ENCODE measurements at regions of chr18 and their contacts with region 1.

Region 1: GRCh38 chr18:3062798-3063680 is 50.1 kb upstream of the LPIN2 start:
- DNase-seq: peak in 1 of 2 experiments; percentile 42
- ATAC-seq: peak; percentile 59 to 91; a peak in 3 of 6 replicates
- H3K4me3 ChIP-seq: no peak overlapping the region
- H3K27ac ChIP-seq: peak overlapping the region in 1 of 2 experiments; percentile 47; a peak in 1 of 6 replicates
- H3K4me1 ChIP-seq: peaks cover 10% of the 10 kb centered on the region
- CTCF ChIP-seq: peak; percentile 60
- EP300 ChIP-seq: no peak
- POLR2A ChIP-seq: no peak
- RAD21 ChIP-seq: peak; percentile 66 to 68

Region 2: GRCh38 chr18:2746274-2746673 is 316.8 kb before region 1 on chr18:
- CTCF ChIA-PET with region 1: no interaction called
- POLR2A ChIA-PET with region 1: no interaction called
- DNase-seq: no peak
- ATAC-seq: no peak
- H3K4me3 ChIP-seq: no peak overlapping the region
- H3K27ac ChIP-seq: no peak overlapping the region
- H3K4me1 ChIP-seq: no peaks in the 10 kb centered on the region
- CTCF ChIP-seq: no peak
- EP300 ChIP-seq: no peak
- POLR2A ChIP-seq: no peak
- RAD21 ChIP-seq: no peak

Region 3: GRCh38 chr18:3037423-3037915 is 25.6 kb before region 1 on chr18:
- CTCF ChIA-PET with region 1: interaction called, 13 read pairs
- POLR2A ChIA-PET with region 1: no interaction called
- DNase-seq: peak; percentile 69 to 84
- ATAC-seq: peak; percentile 93 to 94
- H3K4me3 ChIP-seq: no peak overlapping the region
- H3K27ac ChIP-seq: peak overlapping the region; percentile 75 to 81
- H3K4me1 ChIP-seq: peaks cover 10% of the 10 kb centered on the region
- CTCF ChIP-seq: no peak
- EP300 ChIP-seq: no peak
- POLR2A ChIP-seq: no peak
- RAD21 ChIP-seq: no peak

Region 4: DNA sequence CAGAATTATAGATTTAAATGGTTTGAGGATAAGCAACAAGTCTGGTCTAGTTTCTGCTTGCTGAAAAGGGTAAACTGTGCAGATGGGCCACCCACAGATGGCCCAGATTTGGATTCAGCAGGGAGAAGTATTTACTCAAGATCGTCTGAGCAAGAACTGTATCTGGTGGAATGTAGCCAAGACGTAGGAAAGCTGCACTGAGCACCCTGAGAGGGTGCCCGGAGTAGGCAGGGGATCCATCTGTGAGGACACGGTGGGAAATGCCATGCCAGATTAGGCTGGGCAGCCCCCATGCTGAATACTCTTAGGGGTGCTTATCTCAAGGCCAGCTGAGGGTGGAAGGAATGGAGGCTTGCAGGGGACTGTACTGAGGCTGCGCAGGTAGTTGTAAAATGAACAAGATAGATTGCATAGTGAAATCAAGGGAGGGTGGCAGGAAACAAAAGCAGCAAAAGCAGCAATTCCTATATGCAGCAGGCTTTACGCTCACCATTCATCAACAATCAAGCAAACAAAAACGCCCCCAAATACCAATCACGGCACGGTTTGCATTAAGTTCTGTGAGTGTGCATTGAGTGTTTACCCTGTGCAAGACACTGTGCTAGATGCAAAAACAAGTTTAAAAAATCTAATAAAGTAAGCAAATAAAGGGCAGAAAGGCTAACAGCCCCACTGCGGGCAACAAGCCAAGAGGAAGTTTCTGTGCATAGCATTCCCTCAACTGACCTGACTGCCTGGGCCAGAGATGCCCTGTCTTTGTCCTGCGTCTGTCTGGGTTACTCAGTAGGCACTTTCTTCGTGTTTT is 17.9 kb before region 1 on chr18:
- CTCF ChIA-PET with region 1: interaction called, 11 read pairs
- POLR2A ChIA-PET with region 1: no interaction called
- DNase-seq: peak in 1 of 2 experiments; percentile 61
- ATAC-seq: peak; percentile 70 to 86
- H3K4me3 ChIP-seq: no peak overlapping the region
- H3K27ac ChIP-seq: peak overlapping the region; percentile 70 to 86
- H3K4me1 ChIP-seq: peaks cover 23% of the 10 kb centered on the region
- CTCF ChIP-seq: no peak
- EP300 ChIP-seq: no peak
- POLR2A ChIP-seq: no peak
- RAD21 ChIP-seq: no peak

Region 5: DNA sequence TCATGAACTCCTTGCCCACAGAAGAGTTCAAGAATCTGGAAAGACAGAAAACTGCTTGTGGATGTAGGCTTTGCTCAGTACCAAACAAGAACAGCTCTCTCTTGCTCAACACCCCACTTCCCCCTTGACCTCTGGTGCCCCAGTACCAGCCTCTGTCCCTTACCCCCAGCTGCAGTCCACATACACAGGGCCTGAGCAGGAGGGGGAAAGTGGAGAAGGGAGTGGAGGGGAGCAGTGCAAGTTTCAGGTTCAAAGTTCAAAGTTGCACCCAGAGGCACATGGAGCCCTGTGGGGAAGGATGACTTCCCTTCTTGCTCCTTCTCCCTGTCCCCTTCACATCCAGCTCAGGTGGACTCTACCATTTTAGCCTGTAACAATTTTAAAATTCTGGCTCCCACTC is 11.0 kb after region 1 on chr18:
- CTCF ChIA-PET with region 1: interaction called, 17 read pairs
- POLR2A ChIA-PET with region 1: no interaction called
- DNase-seq: no peak
- ATAC-seq: no peak
- H3K4me3 ChIP-seq: no peak overlapping the region
- H3K27ac ChIP-seq: peak overlapping the region in 1 of 2 experiments; percentile 31; a peak in 1 of 6 replicates
- H3K4me1 ChIP-seq: no peaks in the 10 kb centered on the region
- CTCF ChIP-seq: no peak
- EP300 ChIP-seq: no peak
- POLR2A ChIP-seq: no peak
- RAD21 ChIP-seq: no peak

Region 6: DNA sequence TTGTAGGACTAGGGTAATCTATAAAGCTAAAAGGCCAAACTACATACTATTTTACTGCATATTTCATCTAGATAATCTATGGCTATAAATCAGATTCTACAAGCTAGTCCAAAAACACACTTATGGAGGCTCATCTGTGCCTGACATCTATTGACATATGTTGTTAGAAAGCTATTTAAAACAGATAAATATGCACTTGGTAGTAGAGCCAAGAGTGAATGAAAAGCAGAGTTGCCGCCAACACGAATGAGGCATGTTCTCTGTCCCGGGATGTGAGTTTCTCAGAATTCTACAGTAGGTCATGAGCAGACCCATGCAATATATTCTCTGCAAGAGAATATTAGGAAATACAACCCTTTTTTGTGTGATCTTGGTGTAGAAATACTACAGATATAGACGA is 16.6 kb after region 1 on chr18:
- CTCF ChIA-PET with region 1: interaction called, 17 read pairs
- POLR2A ChIA-PET with region 1: no interaction called
- DNase-seq: no peak
- ATAC-seq: no peak
- H3K4me3 ChIP-seq: no peak overlapping the region
- H3K27ac ChIP-seq: no peak overlapping the region
- H3K4me1 ChIP-seq: no peaks in the 10 kb centered on the region
- CTCF ChIP-seq: no peak
- EP300 ChIP-seq: no peak
- POLR2A ChIP-seq: no peak
- RAD21 ChIP-seq: no peak